PC-3 (cell line): ENCODE measurements at regions of chr15 and their contacts with region 1.

Region 1: DNA sequence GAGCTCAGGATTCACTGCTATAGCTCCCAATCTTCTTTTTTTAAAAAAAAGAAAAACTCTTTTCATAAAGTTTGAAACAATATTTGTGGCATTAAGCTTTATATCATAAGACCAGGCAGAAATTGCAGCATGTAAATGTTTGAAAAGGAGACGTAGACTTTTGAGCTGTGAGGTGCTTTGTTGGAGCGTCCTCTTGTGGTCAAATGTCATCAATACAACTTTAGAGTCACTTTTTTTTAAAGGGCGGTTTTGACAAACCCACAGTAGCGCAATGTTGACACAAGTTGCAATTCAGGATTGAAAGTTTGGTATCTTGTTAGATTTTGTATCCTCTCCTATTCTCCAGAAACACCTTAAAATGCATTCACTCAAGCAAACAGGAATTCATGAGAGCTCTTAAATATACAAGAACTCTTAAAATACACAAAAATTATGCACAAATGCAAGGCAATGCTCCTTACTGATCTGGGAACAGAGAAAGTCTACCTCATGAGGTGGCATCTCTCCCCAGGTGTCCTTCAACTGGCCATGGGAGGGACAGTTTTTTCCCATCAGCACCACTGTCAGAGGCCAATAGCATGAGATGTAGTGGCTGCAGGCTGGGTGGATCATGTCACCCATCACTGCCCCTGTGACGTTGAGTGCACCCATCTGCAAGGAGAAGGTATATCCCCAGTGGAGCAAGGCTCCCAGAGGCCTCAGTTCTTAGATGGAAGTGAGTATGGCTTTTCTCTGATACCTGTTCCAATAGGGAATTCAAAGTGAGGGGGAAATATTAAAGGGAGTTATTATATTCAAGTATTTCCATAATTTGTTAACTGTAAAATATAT is 70.7 kb downstream of the ANXA2 start:
- DNase-seq: peak; percentile 79
- ATAC-seq: peak; percentile 59
- H3K4me3 ChIP-seq: no peak overlapping the region
- H3K27ac ChIP-seq: no peak overlapping the region
- H3K4me1 ChIP-seq: no peaks in the 10 kb centered on the region; the same call in 1 of the 2 replicates
- H3K27me3 ChIP-seq: peaks cover 46% of the 10 kb centered on the region
- CTCF ChIP-seq: peak; percentile 83

Region 2: GRCh38 chr15:59725172-59725486 is 601.9 kb before region 1 on chr15:
- CTCF ChIA-PET with region 1: interaction called, 4 read pairs
- POLR2A ChIA-PET with region 1: no interaction called
- intact Hi-C with region 1: loop called (anchors 1 kb)
- DNase-seq: no peak
- ATAC-seq: no peak
- H3K4me3 ChIP-seq: no peak overlapping the region
- H3K27ac ChIP-seq: no peak overlapping the region
- H3K4me1 ChIP-seq: no peaks in the 10 kb centered on the region
- H3K27me3 ChIP-seq: peaks cover 77% of the 10 kb centered on the region
- CTCF ChIP-seq: no peak

Region 3: GRCh38 chr15:60006203-60006862 is 320.7 kb before region 1 on chr15:
- CTCF ChIA-PET with region 1: no interaction called
- POLR2A ChIA-PET with region 1: no interaction called
- intact Hi-C with region 1: loop called (anchors 10 kb)
- DNase-seq: peak; percentile 42
- ATAC-seq: peak; percentile 83
- H3K4me3 ChIP-seq: peak overlapping the region; percentile 67
- H3K27ac ChIP-seq: no peak overlapping the region
- H3K4me1 ChIP-seq: peaks cover 5% of the 10 kb centered on the region; the same call in 1 of the 2 replicates
- H3K27me3 ChIP-seq: peaks cover 67% of the 10 kb centered on the region
- CTCF ChIP-seq: no peak

Region 4: DNA sequence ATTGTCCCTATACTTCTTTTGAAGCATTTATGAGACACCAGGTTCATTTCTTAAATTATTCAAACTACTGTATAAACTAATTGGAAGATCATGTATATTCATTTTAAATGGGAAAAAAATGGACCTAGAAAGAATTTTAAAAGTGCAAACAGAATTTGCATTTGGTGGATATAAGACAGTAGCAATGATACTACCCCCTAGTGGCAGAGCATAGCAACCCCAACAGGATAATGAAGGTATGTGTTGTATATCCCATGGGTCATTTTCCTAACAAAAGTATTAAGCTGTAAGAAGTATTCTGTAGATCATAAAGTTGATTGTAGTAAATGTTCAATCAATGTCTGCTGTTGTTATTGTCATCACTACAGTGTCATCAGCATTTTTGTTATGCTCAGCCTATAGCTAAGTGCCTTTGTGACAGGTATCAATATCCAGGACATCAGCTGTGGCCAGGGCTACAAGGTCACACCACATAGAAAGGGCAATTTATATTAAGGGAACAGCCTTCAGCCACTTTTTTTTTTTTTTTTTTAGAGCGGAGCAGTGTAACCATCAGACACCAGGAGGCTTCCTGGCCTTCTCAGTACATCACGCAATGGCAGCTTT is 147.2 kb before region 1 on chr15:
- CTCF ChIA-PET with region 1: no interaction called
- POLR2A ChIA-PET with region 1: no interaction called
- intact Hi-C with region 1: loop called (anchors 2 kb)
- DNase-seq: peak; percentile 65
- ATAC-seq: peak; percentile 48; the same call in 1 of the 2 replicates
- H3K4me3 ChIP-seq: no peak overlapping the region
- H3K27ac ChIP-seq: no peak overlapping the region
- H3K4me1 ChIP-seq: no peaks in the 10 kb centered on the region
- H3K27me3 ChIP-seq: peaks cover 55% of the 10 kb centered on the region
- CTCF ChIP-seq: peak; percentile 83